ENCODE measurements at regions of chr10 and their contacts with region 1.

Region 1: GRCh38 chr10:27019827-27020226 is 80.5 kb downstream of the ANKRD26 start:
- DNase-seq: no peak
- H3K4me3 ChIP-seq: no peak overlapping the region
- H3K27ac ChIP-seq: no peak overlapping the region
- H3K4me1 ChIP-seq: no peaks in the 10 kb centered on the region
- CTCF ChIP-seq: no peak

Region 2: DNA sequence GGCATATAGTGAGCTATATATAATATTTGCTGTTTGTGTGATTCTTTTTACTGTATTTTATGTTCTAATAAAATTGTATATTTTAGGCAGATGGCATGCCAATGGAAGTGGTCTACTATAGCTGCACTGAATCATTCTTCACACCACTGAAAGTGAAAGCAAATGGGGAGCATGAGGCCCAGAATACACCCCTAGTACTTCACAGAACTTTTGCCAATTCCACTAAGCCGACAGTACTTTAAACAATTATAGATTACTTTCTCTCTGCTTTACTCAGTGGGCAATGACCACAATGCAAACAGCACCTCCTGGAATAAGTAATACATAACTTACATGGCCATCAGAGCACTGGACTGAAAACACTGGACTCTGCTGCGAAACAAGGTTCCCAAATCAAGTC is 10.2 kb after region 1 on chr10:
- CTCF ChIA-PET with region 1: no interaction called
- POLR2A ChIA-PET with region 1: interaction called, 13 read pairs
- intact Hi-C with region 1: no loop called
- DNase-seq: no peak
- H3K4me3 ChIP-seq: no peak overlapping the region
- H3K27ac ChIP-seq: no peak overlapping the region
- H3K4me1 ChIP-seq: no peaks in the 10 kb centered on the region
- CTCF ChIP-seq: no peak

Region 3: DNA sequence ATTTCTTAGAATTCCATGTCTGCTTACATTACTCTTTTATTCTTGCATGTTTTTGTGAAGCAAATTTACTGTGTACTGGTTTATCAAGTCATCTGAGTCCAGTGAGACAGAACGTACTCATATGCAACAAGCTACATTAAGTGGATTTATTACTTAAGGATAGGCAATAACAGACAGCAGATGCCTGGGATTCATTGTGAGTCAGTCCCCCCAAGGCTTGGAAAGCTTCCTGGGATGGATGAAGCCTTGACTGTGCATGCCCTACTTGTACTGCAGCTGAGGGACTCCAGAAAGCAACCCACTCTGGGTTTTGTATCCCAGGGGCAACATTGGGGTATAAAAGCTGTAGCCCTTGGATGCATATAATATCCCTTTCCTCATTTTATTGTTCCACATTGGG is 370.9 kb after region 1 on chr10:
- CTCF ChIA-PET with region 1: no interaction called
- POLR2A ChIA-PET with region 1: no interaction called
- intact Hi-C with region 1: no loop called
- DNase-seq: no peak
- H3K4me3 ChIP-seq: no peak overlapping the region
- H3K27ac ChIP-seq: no peak overlapping the region
- H3K4me1 ChIP-seq: no peaks in the 10 kb centered on the region
- CTCF ChIP-seq: no peak